Posterior vena cava (tissue), 2 donors: ENCODE measurements at regions of chr1 and their contacts with region 1.

Region 1: DNA sequence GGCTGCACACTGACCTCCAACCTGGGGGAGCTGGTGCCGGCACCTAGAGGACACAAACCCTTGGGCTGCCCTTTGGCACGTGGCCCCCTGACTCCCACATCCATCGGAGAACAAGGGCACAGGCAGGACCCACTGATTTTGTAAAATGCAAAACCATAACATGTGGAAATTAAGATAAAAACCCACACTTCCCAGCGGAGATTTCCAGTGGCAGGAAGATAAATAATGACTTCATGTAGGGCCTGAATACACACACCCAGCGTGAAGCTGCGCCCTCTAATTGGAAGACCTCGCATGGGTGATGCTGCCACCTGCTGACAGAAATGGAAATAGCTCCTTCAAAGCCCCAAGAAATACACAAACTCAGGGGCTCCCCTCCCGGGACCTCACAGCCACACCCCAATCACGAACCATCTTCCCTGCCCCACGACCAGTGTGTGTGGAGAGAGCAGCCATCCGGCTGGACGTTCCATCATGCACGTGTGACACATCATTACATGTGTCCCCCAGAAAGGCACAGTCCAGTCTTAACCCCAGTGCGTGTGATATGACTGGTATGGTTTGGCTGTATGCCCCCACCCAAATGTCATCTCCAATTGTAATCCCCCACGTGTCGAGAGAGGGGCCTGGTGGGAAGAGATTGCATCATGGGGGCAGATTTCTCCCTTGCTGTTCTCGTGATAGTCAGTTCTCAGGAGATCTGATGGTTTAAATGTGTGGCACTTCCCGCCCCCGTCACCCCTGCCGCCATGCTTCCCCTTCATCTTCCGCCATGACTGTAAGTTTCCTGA is 5.7 kb upstream of the TPRG1L start:
- DNase-seq: peak; percentile 89

Region 2: GRCh38 chr1:3480369-3480719 is 138.7 kb before region 1 on chr1:
- intact Hi-C with region 1: no loop called
- DNase-seq: no peak

Region 3: GRCh38 chr1:3491291-3492246 is 127.5 kb before region 1 on chr1:
- intact Hi-C with region 1: loop called (anchors 2 kb)
- DNase-seq: peak; percentile 93